BJ (cell line): ENCODE measurements at regions of chr13 and their contacts with region 1.

Region 1: DNA sequence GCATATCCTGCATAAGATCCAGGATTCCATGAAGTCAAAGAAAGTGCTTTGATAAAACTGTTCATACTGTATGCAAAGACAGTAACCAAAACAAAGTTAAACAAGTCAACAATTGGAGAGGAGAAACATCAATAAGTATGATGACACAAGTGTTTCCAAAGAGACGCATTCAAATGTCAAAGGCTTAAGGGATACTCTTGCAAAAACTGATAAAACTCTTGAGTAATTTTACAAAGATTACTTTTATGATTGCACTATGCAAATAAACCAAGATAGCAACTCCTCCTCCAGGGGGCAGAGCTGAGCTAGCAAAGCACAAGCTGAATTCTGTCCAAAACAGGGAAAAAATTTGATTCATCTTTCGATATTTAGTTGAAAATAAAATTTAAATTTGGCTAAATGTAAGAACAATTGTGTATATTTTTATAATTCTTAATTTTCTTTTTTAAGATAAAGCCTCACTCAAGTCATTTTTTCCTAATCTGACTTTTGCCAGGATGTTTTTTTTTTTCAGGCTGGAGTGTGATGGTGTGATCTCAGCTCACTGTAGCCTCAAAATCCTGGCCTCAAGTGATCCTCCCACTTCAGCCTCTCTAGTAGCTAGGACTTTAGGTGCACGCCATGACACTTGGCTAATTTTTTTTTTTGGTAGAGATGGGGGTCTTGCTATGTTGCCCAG is 84.0 kb downstream of the MZT1 start:
- DNase-seq: no peak
- H3K4me3 ChIP-seq: no peak overlapping the region
- H3K27me3 ChIP-seq: no peaks in the 10 kb centered on the region
- CTCF ChIP-seq: peak; percentile 81

Region 2: GRCh38 chr13:72696579-72696978 is 53.1 kb after region 1 on chr13:
- CTCF ChIA-PET with region 1: interaction called, 15 read pairs
- POLR2A ChIA-PET with region 1: no interaction called
- DNase-seq: no peak
- H3K4me3 ChIP-seq: no peak overlapping the region
- H3K27me3 ChIP-seq: no peaks in the 10 kb centered on the region
- CTCF ChIP-seq: peak; percentile 16; the same call in 1 of the 2 replicates